ENCODE measurements at regions of chr4 and their contacts with region 1.

Region 1: GRCh38 chr4:15836362-15836761 is 58.2 kb downstream of the CD38 start:
- DNase-seq: no peak
- H3K4me3 ChIP-seq: no peak overlapping the region
- H3K27ac ChIP-seq: no peak overlapping the region
- H3K4me1 ChIP-seq: no peaks in the 10 kb centered on the region
- H3K27me3 ChIP-seq: no peaks in the 10 kb centered on the region
- CTCF ChIP-seq: no peak

Region 2: GRCh38 chr4:15719506-15719905 is 116.9 kb before region 1 on chr4:
- intact Hi-C with region 1: no loop called
- DNase-seq: no peak
- H3K4me3 ChIP-seq: no peak overlapping the region
- H3K27ac ChIP-seq: no peak overlapping the region
- H3K4me1 ChIP-seq: no peaks in the 10 kb centered on the region
- H3K27me3 ChIP-seq: no peaks in the 10 kb centered on the region
- CTCF ChIP-seq: no peak

Region 3: GRCh38 chr4:15855804-15856475 is 19.6 kb after region 1 on chr4:
- intact Hi-C with region 1: loop called (anchors 2 kb)
- DNase-seq: no peak
- H3K4me3 ChIP-seq: no peak overlapping the region
- H3K27ac ChIP-seq: no peak overlapping the region
- H3K4me1 ChIP-seq: no peaks in the 10 kb centered on the region
- H3K27me3 ChIP-seq: no peaks in the 10 kb centered on the region
- CTCF ChIP-seq: no peak

Region 4: DNA sequence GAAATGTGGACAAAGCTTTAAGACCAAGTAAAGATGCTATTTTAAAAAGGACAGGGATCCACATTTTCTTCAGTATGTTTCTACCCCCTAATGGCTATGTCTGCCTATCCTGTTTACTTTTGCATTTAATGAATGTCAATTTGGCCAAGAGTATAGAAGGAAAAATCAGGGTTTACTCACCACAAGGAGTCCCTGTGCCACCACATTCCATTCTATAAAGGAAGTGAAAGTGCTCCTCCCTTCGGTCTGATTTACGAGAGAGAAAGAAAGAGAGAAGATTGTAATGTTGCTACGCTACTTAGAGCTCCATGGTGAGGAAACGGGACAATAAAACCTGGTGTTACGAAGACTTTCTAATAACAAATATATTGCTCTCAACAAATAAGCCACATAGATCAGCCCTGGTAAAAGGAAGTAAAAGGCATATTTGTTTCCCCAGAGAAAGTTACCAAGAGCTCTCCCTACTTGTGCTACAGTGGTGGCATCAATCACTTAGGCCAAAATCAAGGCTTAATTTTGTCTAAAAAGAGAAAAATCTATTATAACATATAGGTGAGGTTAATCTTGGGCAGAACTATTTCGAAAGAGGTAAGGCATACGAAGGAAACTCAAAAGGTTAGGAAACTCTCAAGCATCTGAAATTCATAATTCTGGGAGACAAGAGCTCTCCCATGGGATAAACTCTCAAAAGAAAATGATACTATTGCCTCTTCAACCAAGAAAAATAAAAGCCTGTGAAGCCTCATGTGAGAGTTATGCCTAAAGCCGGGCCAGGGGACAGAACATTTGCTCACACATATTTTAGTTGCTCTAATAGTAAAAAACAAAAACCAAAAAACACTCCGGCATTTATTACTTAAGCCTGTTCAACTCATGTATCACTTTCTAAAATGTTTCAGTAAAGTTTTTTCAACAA is 360.4 kb after region 1 on chr4:
- intact Hi-C with region 1: no loop called
- DNase-seq: peak; percentile 54
- H3K4me3 ChIP-seq: no peak overlapping the region
- H3K27ac ChIP-seq: peak overlapping the region; percentile 18
- H3K4me1 ChIP-seq: no peaks in the 10 kb centered on the region
- H3K27me3 ChIP-seq: no peaks in the 10 kb centered on the region
- CTCF ChIP-seq: peak; percentile 41

Region 5: GRCh38 chr4:16418814-16419213 is 582.5 kb after region 1 on chr4:
- intact Hi-C with region 1: no loop called
- DNase-seq: no peak
- H3K4me3 ChIP-seq: no peak overlapping the region
- H3K27ac ChIP-seq: no peak overlapping the region
- H3K4me1 ChIP-seq: no peaks in the 10 kb centered on the region
- H3K27me3 ChIP-seq: no peaks in the 10 kb centered on the region
- CTCF ChIP-seq: no peak

Measured in colonic mucosa (tissue), 4 donors.